IMR-90 (cell line): ENCODE measurements at regions of chr4 and their contacts with region 1.

Region 1: GRCh38 chr4:118410138-118410537 is 57.3 kb upstream of the PRSS12 start:
- DNase-seq: peak; percentile 90
- ATAC-seq: peak; percentile 87
- H3K4me3 ChIP-seq: no peak overlapping the region
- H3K27ac ChIP-seq: peak overlapping the region; percentile 67; the same call in 1 of the 2 replicates
- H3K4me1 ChIP-seq: no peaks in the 10 kb centered on the region; the same call in 1 of the 2 replicates
- H3K27me3 ChIP-seq: no peaks in the 10 kb centered on the region
- CTCF ChIP-seq: no peak
- POLR2A ChIP-seq: no peak
- RAD21 ChIP-seq: no peak

Region 2: GRCh38 chr4:118034053-118034785 is 375.9 kb before region 1 on chr4 and contains the start of gene NDST3:
- CTCF ChIA-PET with region 1: no interaction called
- POLR2A ChIA-PET with region 1: no interaction called
- dilution Hi-C with region 1: no loop called
- in situ Hi-C with region 1: no loop called
- intact Hi-C with region 1: no loop called
- DNase-seq: peak; percentile 31
- ATAC-seq: peak; percentile 28
- H3K4me3 ChIP-seq: peak within 1 kb of the TSS; percentile 44
- H3K27ac ChIP-seq: no peak within 1 kb of the TSS
- H3K4me1 ChIP-seq: no peaks in the 10 kb centered on the region
- H3K27me3 ChIP-seq: 0 out of 2 replicates have a peak, but pooled peaks cover 2% of the 10 kb centered on the region
- CTCF ChIP-seq: peak; percentile 29; the same call in 1 of the 2 replicates
- POLR2A ChIP-seq: no peak
- RAD21 ChIP-seq: peak; percentile 50
- total RNA-seq, gene NDST3: under 0.01 and 0.18 TPM in 2 replicates

Region 3: DNA sequence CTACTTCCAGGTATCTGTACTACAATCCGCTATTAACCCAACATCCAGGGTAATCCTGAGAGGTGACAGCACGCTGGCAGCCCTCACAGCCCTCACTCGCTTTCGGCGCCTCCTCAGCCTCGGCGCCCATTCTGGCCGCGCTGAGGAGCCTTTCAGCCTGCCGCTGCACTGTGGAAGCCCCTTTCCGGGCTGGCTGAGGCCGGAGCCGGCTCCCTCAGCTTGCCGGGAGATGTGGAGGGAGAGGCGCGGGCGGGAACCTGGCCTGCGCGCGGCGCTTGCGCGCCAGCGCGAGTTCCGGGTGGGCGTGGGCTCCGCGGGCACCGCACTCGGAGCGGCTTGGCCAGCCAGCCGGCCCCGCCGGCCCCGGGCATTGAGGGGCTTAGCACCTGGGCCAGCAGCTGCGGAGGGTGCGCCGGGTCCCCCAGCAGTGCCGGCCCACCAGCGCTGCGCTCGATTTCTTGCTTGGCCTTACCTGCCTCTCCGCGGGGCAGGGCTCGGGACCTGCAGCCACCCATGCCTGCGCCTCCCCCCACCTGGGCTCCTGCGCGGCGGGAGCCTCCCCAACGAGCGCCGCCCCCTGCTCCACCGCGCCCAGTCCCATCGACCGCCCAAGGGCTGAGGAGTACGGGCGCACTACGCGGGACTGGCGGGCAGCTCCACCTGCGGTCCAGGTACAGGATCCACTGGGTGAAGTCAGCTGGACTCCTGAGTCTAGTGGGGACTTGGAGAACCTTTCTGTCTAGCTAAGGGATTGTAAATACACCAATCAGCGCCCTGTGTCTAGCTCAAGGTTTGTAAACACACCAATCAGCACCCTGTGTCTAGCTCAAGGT is 144.6 kb before region 1 on chr4:
- CTCF ChIA-PET with region 1: no interaction called
- POLR2A ChIA-PET with region 1: no interaction called
- dilution Hi-C with region 1: no loop called
- in situ Hi-C with region 1: no loop called
- intact Hi-C with region 1: no loop called
- DNase-seq: no peak
- ATAC-seq: peak; percentile 72
- H3K4me3 ChIP-seq: peak overlapping the region; percentile 53
- H3K27ac ChIP-seq: no peak overlapping the region; the same call in 1 of the 2 replicates
- H3K4me1 ChIP-seq: no peaks in the 10 kb centered on the region
- H3K27me3 ChIP-seq: no peaks in the 10 kb centered on the region
- CTCF ChIP-seq: no peak
- POLR2A ChIP-seq: no peak
- RAD21 ChIP-seq: no peak

Region 4: GRCh38 chr4:118398226-118399090 is 11.7 kb before region 1 on chr4:
- CTCF ChIA-PET with region 1: no interaction called
- POLR2A ChIA-PET with region 1: no interaction called
- dilution Hi-C with region 1: no loop called
- in situ Hi-C with region 1: no loop called
- intact Hi-C with region 1: loop called (anchors 1 kb)
- DNase-seq: no peak
- ATAC-seq: no peak
- H3K4me3 ChIP-seq: no peak overlapping the region
- H3K27ac ChIP-seq: peak overlapping the region; percentile 100; the same call in 1 of the 2 replicates
- H3K4me1 ChIP-seq: peaks cover 18% of the 10 kb centered on the region
- H3K27me3 ChIP-seq: no peaks in the 10 kb centered on the region
- CTCF ChIP-seq: no peak
- POLR2A ChIP-seq: no peak
- RAD21 ChIP-seq: no peak